ENCODE measurements at regions of chr3 and their contacts with region 1.

Region 1: DNA sequence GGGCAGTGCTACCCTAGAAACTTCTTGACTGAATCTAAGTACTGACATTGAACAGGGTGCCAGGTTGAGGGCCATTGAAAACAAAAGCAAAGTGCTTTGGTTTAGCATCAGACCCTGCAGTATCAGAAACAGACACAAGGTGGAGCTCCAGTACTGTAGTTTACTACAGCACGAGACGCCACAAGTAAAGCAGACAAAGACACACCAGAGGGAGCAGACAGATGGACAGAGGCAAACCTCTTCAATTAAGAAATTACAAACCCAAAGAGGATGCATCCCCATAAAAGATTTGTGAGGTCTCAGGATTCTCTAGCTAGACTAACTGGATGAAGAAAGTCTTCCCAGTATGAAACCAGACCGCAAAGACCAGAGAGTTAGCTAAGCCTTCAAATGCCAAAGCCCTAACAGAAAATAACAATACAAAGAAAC is 16.6 kb downstream of the TOP2B start:
- DNase-seq: peak; percentile 85
- ATAC-seq: peak; percentile 86
- H3K4me3 ChIP-seq: no peak overlapping the region
- H3K4me3 Mint-ChIP-seq: no peak overlapping the region
- H3K27ac ChIP-seq: no peak overlapping the region
- H3K27ac Mint-ChIP-seq: no peak overlapping the region
- H3K4me1 ChIP-seq: peaks cover 3 to 11% of the 10 kb centered on the region in 2 donors
- H3K4me1 Mint-ChIP-seq: peaks cover 30% of the 10 kb centered on the region
- H3K27me3 ChIP-seq: no peaks in the 10 kb centered on the region
- H3K27me3 Mint-ChIP-seq: no peaks in the 10 kb centered on the region
- CTCF ChIP-seq: peak; percentile 87

Region 2: GRCh38 chr3:25558111-25558510 is 90.0 kb before region 1 on chr3:
- CTCF ChIA-PET with region 1: no interaction called
- POLR2A ChIA-PET with region 1: no interaction called
- intact Hi-C with region 1: no loop called
- DNase-seq: no peak
- ATAC-seq: no peak
- H3K4me3 ChIP-seq: no peak overlapping the region
- H3K4me3 Mint-ChIP-seq: no peak overlapping the region
- H3K27ac ChIP-seq: no peak overlapping the region
- H3K27ac Mint-ChIP-seq: no peak overlapping the region
- H3K4me1 ChIP-seq: no peaks in the 10 kb centered on the region
- H3K4me1 Mint-ChIP-seq: no peaks in the 10 kb centered on the region
- H3K27me3 ChIP-seq: peaks cover 0 to 2% (median 0%) of the 10 kb centered on the region in 4 experiments
- H3K27me3 Mint-ChIP-seq: peaks cover 3% of the 10 kb centered on the region
- CTCF ChIP-seq: no peak

Region 3: DNA sequence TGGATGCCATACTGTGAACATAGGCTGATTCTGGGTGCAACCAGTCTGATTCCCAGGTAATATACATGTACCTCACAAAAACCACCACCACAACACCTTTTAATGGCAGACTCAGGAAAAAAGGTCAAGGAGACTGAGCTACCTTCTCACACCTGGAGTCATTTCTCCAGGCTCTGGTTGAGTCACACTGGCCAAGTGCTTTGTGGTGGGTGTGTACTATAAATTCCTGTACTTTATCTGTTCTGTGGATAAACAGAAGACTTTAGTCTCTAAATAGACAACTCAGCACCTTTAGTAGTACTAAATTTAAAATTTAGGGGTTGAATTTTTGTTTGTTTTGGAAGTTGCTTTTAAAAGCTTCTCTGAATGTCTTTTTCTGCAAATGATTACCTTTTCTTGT is 30.1 kb before region 1 on chr3:
- CTCF ChIA-PET with region 1: no interaction called
- POLR2A ChIA-PET with region 1: no interaction called
- intact Hi-C with region 1: no loop called
- DNase-seq: no peak
- ATAC-seq: no peak
- H3K4me3 ChIP-seq: no peak overlapping the region
- H3K4me3 Mint-ChIP-seq: no peak overlapping the region
- H3K27ac ChIP-seq: no peak overlapping the region
- H3K27ac Mint-ChIP-seq: no peak overlapping the region
- H3K4me1 ChIP-seq: no peaks in the 10 kb centered on the region
- H3K4me1 Mint-ChIP-seq: no peaks in the 10 kb centered on the region
- H3K27me3 ChIP-seq: no peaks in the 10 kb centered on the region
- H3K27me3 Mint-ChIP-seq: no peaks in the 10 kb centered on the region
- CTCF ChIP-seq: no peak

Region 4: DNA sequence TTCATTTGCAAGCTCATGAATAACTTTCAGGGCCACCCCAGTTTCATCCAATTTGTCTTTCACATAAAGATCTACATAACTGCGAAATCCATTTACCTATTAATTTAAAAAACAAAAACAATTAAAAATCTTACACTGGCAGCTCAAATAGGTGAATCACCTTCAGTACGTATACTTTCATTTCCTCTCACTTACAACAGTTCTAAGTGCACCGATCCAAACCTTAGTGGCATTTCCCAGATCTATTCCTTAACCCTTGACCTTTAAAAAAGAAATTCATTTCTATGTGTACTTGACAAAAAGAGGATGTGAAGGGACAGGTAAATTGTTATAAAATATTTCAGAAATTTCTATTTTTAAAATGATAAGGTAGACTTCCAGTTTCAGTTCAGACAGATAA is 14.2 kb before region 1 on chr3:
- CTCF ChIA-PET with region 1: interaction called, 11 read pairs
- POLR2A ChIA-PET with region 1: no interaction called
- intact Hi-C with region 1: no loop called
- DNase-seq: no peak
- ATAC-seq: no peak
- H3K4me3 ChIP-seq: no peak overlapping the region
- H3K4me3 Mint-ChIP-seq: no peak overlapping the region
- H3K27ac ChIP-seq: peak overlapping the region in 1 of 2 donors; percentile 2
- H3K27ac Mint-ChIP-seq: no peak overlapping the region
- H3K4me1 ChIP-seq: no peaks in the 10 kb centered on the region
- H3K4me1 Mint-ChIP-seq: peaks cover 3% of the 10 kb centered on the region
- H3K27me3 ChIP-seq: no peaks in the 10 kb centered on the region
- H3K27me3 Mint-ChIP-seq: no peaks in the 10 kb centered on the region
- CTCF ChIP-seq: no peak

Region 5: DNA sequence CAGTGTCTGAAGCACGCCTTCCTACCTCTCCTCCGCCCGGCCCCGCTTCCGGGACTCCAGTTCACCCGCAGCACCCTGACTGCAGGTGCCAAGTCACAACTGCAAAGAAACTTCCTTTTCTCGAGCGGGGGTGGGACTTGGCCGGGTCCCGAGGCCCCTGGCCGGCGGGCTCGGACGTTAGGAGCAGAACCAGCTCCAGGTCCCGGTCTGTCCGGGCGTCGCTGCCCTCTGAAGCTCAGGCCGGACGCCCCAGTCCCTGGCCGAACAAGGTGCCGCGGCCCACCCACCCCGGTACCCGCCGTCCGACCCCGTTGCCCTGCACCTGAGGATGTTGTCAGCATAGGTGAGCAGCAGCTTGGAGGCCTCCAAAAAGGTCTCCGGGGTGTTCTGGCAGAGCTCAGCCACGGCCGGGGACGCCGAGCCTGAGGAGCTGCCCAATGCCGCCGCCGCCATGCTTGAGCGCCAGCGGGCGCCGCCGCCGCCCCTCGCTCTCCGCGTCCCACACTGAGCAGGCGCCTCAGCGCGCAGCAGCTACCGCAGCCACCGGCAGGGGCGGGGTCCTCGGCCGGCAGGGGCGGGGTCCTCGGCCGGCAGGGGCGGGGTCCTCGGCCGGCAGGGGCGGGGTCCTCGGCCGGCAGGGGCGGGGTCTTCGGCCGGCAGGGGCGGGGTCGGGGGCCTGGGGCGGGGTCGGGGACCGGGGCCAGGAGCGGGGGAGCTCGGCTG is 135.0 kb after region 1 on chr3 and contains the start of gene NGLY1:
- CTCF ChIA-PET with region 1: interaction called, 10 read pairs
- POLR2A ChIA-PET with region 1: interaction called, 5 read pairs
- intact Hi-C with region 1: loop called (anchors 5 kb)
- DNase-seq: peak; percentile 90
- ATAC-seq: peak; percentile 82
- H3K4me3 ChIP-seq: peak within 1 kb of the TSS; percentile 81 to 95 (median 86)
- H3K4me3 Mint-ChIP-seq: peak within 1 kb of the TSS; percentile 92
- H3K27ac ChIP-seq: peak within 1 kb of the TSS; percentile 94 to 97
- H3K27ac Mint-ChIP-seq: peak within 1 kb of the TSS; percentile 98
- H3K4me1 ChIP-seq: peaks cover 27 to 32% of the 10 kb centered on the region in 2 donors
- H3K4me1 Mint-ChIP-seq: peaks cover 48% of the 10 kb centered on the region
- H3K27me3 ChIP-seq: no peaks in the 10 kb centered on the region
- H3K27me3 Mint-ChIP-seq: no peaks in the 10 kb centered on the region
- CTCF ChIP-seq: no peak
- total RNA-seq, gene NGLY1: 144 and 145 TPM in 2 replicates

Region 6: DNA sequence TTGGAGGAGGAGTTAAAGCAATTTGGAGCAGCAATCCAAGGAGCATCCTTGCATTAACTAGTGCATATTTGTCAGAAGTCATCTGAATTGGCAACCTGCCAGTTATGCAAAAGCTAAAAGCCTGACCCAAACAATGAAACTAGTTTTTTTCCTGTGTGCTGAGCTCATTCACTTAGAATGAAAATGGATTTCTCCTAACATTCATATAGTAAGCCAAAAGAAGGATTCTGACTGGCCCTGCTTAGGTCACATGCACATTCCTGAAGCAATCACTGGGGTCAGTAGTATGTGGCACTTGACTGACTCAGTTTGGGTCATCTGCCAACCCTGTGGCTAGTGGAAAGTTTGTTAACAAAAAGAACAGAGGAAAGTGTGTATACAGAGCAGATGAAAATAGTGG is 172.2 kb after region 1 on chr3:
- CTCF ChIA-PET with region 1: no interaction called
- POLR2A ChIA-PET with region 1: no interaction called
- intact Hi-C with region 1: no loop called
- DNase-seq: no peak
- ATAC-seq: no peak
- H3K4me3 ChIP-seq: no peak overlapping the region
- H3K4me3 Mint-ChIP-seq: no peak overlapping the region
- H3K27ac ChIP-seq: no peak overlapping the region
- H3K27ac Mint-ChIP-seq: no peak overlapping the region
- H3K4me1 ChIP-seq: peaks cover 0 to 8% of the 10 kb centered on the region in 2 donors
- H3K4me1 Mint-ChIP-seq: no peaks in the 10 kb centered on the region
- H3K27me3 ChIP-seq: no peaks in the 10 kb centered on the region
- H3K27me3 Mint-ChIP-seq: peaks cover 4% of the 10 kb centered on the region
- CTCF ChIP-seq: no peak

Region 7: GRCh38 chr3:25856902-25857518 is 208.9 kb after region 1 on chr3:
- CTCF ChIA-PET with region 1: interaction called, 213 read pairs
- POLR2A ChIA-PET with region 1: no interaction called
- intact Hi-C with region 1: loop called (anchors 1 kb)
- DNase-seq: peak; percentile 65
- ATAC-seq: peak; percentile 63
- H3K4me3 ChIP-seq: no peak overlapping the region
- H3K4me3 Mint-ChIP-seq: no peak overlapping the region
- H3K27ac ChIP-seq: no peak overlapping the region
- H3K27ac Mint-ChIP-seq: no peak overlapping the region
- H3K4me1 ChIP-seq: no peaks in the 10 kb centered on the region
- H3K4me1 Mint-ChIP-seq: no peaks in the 10 kb centered on the region
- H3K27me3 ChIP-seq: no peaks in the 10 kb centered on the region
- H3K27me3 Mint-ChIP-seq: no peaks in the 10 kb centered on the region
- CTCF ChIP-seq: peak; percentile 86

Region 8: GRCh38 chr3:26078539-26078938 is 430.4 kb after region 1 on chr3:
- CTCF ChIA-PET with region 1: no interaction called
- POLR2A ChIA-PET with region 1: no interaction called
- intact Hi-C with region 1: loop called (anchors 10 kb)
- DNase-seq: no peak
- ATAC-seq: no peak
- H3K4me3 ChIP-seq: no peak overlapping the region
- H3K4me3 Mint-ChIP-seq: no peak overlapping the region
- H3K27ac ChIP-seq: no peak overlapping the region
- H3K27ac Mint-ChIP-seq: no peak overlapping the region
- H3K4me1 ChIP-seq: no peaks in the 10 kb centered on the region
- H3K4me1 Mint-ChIP-seq: no peaks in the 10 kb centered on the region
- H3K27me3 ChIP-seq: no peaks in the 10 kb centered on the region
- H3K27me3 Mint-ChIP-seq: no peaks in the 10 kb centered on the region
- CTCF ChIP-seq: no peak

Measured in B cell (primary cell).